HepG2 (cell line): ENCODE measurements at regions of chr6 and their contacts with region 1.

Region 1: GRCh38 chr6:11144393-11144851 is 32.9 kb upstream of the ERVFRD-1 start:
- DNase-seq: peak; percentile 77
- ATAC-seq: peak; percentile 94
- H3K4me3 ChIP-seq: no peak overlapping the region
- H3K27ac ChIP-seq: no peak overlapping the region
- H3K4me1 ChIP-seq: peaks cover 16% of the 10 kb centered on the region
- H3K27me3 ChIP-seq: no peaks in the 10 kb centered on the region
- CTCF ChIP-seq: peak; percentile 99
- EP300 ChIP-seq: no peak
- POLR2A ChIP-seq: no peak
- RAD21 ChIP-seq: peak; percentile 95

Region 2: DNA sequence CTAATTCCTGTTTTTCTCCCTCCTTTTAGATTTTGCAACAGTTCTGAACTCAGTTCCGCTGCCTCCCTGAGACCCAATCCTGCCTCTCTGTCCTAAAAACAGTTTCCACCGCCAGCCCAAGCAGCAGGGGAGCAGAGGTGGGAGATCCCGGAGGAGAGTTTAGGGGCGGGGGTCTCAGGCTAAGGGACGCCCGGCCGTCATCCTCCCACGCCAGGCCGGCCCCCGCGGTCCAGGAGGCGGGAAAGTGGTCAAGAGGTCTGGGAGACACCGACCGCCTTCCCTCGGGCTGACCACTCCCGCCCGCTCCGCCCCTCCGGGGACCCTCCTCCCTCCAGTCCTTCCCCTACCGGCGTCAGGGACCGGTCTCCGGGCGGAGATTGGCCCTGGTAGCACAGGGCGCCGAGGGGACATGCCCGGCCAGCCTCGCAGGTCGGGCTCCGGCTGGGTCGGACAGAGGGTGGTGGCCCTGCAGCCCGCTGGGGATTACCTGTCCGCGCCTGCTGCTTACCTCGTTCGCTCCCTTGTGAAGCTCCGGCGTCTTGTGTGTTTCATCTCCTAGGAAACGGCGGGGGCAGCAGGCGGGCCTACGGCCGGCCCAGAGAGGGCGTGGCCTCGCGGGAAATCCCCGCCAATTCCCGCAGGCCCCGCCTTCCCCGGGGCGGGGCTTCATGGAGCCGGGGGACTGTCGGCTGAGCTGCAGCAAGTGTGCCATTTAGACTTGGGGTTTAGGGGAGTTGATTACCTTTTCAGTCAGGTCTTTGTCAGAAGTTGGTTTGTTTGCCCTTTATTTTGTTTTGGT is 306.2 kb before region 1 on chr6 and contains the start of gene MAK:
- CTCF ChIA-PET with region 1: no interaction called
- POLR2A ChIA-PET with region 1: no interaction called
- in situ Hi-C with region 1: no loop called
- intact Hi-C with region 1: no loop called
- DNase-seq: peak; percentile 90
- ATAC-seq: peak; percentile 95
- H3K4me3 ChIP-seq: peak within 1 kb of the TSS; percentile 67 to 80 (median 69)
- H3K27ac ChIP-seq: peak within 1 kb of the TSS; percentile 55
- H3K4me1 ChIP-seq: peaks cover 28% of the 10 kb centered on the region
- H3K27me3 ChIP-seq: peaks cover 0 to 32% of the 10 kb centered on the region in 2 experiments; a peak in 3 of 5 replicates
- CTCF ChIP-seq: peak; percentile 18; the same call in 1 of the 2 replicates
- EP300 ChIP-seq: no peak
- POLR2A ChIP-seq: peak; percentile 36 to 48; a peak in 3 of 4 replicates
- RAD21 ChIP-seq: no peak
- total RNA-seq, gene MAK: 0.04 and 0.17 TPM in 2 replicates

Region 3: GRCh38 chr6:11093589-11094410 is 50.6 kb before region 1 on chr6 and contains the start of gene SMIM13:
- CTCF ChIA-PET with region 1: no interaction called
- POLR2A ChIA-PET with region 1: no interaction called
- in situ Hi-C with region 1: no loop called
- intact Hi-C with region 1: loop called (anchors 5 kb)
- DNase-seq: peak; percentile 98
- ATAC-seq: peak; percentile 97
- H3K4me3 ChIP-seq: peak within 1 kb of the TSS; percentile 93 to 99 (median 97)
- H3K27ac ChIP-seq: peak within 1 kb of the TSS; percentile 90
- H3K4me1 ChIP-seq: peaks cover 44% of the 10 kb centered on the region
- H3K27me3 ChIP-seq: no peaks in the 10 kb centered on the region; a peak in 1 of 5 replicates
- CTCF ChIP-seq: peak; percentile 67
- EP300 ChIP-seq: peak in 1 of 2 experiments; percentile 20; a peak in 2 of 4 replicates
- POLR2A ChIP-seq: peak; percentile 89 to 92
- RAD21 ChIP-seq: peak; percentile 79
- total RNA-seq, gene SMIM13: 9.5 and 10.2 TPM in 2 replicates

Region 4: DNA sequence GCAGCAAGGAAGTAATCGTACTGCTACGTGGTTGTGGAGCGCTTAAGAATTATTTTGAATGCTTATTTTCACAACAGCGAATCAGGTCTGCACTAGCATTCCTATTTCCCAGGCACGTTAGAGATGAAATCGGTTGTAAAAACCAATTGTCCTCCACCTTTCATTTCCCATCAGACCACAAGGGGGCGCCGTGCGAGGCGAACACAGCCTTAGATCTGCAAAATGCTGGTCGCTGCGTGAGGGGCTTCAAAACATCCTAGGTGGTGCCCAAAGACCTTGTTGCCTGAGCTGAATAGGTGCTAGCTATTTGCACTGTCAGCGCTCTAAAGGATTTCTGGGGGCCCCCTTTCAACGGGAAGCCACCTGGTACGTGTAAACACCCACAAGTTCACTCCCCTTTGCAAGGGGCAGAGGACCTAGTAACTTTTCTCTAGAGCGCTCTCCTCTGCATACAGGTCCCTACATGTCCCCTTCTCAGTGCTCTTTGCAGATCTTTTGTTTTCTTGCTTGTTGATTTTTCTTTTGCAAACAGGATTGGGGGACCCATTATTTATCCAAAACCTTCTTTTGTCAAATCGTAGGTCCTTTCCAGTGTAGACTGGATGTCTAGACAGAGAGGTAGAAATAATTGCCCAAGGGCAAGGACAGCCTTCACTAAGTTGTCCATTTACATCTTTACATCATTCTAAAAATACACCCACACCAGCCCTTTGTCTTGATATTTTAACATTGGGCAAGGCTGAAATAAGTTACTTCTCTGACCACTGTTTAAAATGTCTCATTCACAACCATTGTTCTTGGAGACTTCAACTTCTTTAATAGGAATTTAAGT is 28.3 kb after region 1 on chr6:
- CTCF ChIA-PET with region 1: interaction called, 14 read pairs
- POLR2A ChIA-PET with region 1: no interaction called
- in situ Hi-C with region 1: no loop called
- intact Hi-C with region 1: loop called (anchors 2 kb)
- DNase-seq: peak; percentile 66
- ATAC-seq: peak; percentile 86
- H3K4me3 ChIP-seq: peak overlapping the region in 1 of 3 experiments; percentile 47; a peak in 2 of 6 replicates
- H3K27ac ChIP-seq: no peak overlapping the region
- H3K4me1 ChIP-seq: peaks cover 36% of the 10 kb centered on the region
- H3K27me3 ChIP-seq: no peaks in the 10 kb centered on the region
- CTCF ChIP-seq: peak; percentile 96
- EP300 ChIP-seq: no peak
- POLR2A ChIP-seq: no peak
- RAD21 ChIP-seq: peak; percentile 83

Region 5: DNA sequence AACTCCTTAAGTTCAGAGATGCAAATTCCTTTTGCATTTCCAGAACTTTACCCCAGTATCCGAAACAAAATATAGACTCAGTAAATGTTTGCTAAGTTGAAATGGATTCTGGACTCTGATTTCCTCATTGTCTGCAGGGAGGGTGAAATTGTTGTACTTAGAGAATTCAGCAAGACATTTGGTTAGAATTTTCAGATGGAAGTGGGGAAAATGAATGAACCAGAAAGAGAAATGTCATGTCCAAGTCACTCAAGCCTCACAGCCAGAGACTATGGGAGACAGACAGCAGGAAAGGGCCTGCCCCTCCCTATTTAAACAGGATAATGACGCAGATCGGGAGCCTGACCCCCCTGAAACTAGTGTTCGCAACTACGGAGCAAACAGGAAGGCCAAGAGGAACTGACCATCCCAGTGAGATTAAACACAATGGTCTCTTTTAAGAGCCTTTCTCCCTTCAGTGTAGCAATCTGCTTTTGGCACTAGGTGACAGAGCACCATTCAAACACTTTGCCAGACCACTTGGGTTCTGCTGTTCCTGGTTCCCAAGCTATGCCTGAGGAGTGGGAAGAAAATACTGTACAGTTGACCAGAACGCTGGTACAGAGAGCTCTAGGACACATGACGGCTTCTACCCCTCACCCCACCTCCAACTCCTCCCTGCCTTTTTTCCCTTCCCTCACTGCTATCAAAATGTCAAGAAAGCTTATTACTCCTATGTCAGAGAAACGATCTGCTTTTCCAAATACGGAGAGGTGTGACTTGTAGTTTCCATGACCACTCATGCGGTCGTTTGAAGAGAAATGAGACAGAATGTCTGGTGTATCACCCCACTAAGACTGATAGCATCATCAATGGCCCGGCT is 74.3 kb after region 1 on chr6:
- CTCF ChIA-PET with region 1: no interaction called
- POLR2A ChIA-PET with region 1: no interaction called
- in situ Hi-C with region 1: no loop called
- intact Hi-C with region 1: loop called (anchors 5 kb)
- DNase-seq: peak; percentile 99
- ATAC-seq: peak; percentile 91
- H3K4me3 ChIP-seq: peak overlapping the region; percentile 13 to 54 (median 21)
- H3K27ac ChIP-seq: peak overlapping the region; percentile 85
- H3K4me1 ChIP-seq: peaks cover 100% of the 10 kb centered on the region
- H3K27me3 ChIP-seq: no peaks in the 10 kb centered on the region
- CTCF ChIP-seq: peak; percentile 46
- EP300 ChIP-seq: peak; percentile 86 to 89; a peak in 3 of 4 replicates
- POLR2A ChIP-seq: peak in 1 of 2 experiments; percentile 77; a peak in 3 of 4 replicates
- RAD21 ChIP-seq: peak; percentile 76

Region 6: DNA sequence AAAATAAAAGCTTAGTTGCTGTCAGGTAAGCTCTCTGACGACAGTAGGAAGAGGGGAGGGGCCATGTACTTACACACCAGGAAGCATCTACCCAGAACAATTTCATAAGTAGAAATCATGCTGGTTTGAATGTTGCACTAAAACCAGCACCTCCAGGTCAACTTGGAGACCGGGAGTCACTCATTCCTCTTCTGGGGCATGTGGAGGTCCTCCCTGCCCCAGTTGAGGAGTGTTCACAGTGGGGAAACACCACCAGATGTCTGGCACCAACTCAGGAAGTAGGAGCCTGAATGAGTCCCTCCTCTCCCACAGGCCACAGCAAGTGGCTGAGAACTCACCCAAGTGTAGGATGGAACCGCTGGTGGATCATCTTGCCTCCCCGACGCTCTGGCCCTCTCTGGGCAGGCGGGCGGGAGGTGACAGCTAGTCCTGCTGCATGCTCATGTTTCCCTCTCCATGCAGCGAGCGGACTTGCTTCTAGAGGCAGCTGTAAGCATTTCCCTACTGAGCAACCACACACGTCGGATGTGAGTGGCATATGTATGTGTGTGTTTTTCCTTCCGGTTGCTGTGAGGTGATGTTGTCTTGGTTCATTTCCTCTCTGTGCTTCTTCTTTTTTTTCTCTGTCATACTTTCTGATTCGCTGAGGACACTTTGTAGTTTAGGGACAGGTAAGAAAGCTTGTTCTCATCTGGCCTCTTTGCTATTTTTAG is 237.5 kb after region 1 on chr6:
- CTCF ChIA-PET with region 1: no interaction called
- POLR2A ChIA-PET with region 1: no interaction called
- in situ Hi-C with region 1: no loop called
- intact Hi-C with region 1: no loop called
- DNase-seq: no peak
- ATAC-seq: no peak
- H3K4me3 ChIP-seq: no peak overlapping the region
- H3K27ac ChIP-seq: no peak overlapping the region
- H3K4me1 ChIP-seq: peaks cover 20% of the 10 kb centered on the region
- H3K27me3 ChIP-seq: no peaks in the 10 kb centered on the region
- CTCF ChIP-seq: no peak
- EP300 ChIP-seq: no peak
- POLR2A ChIP-seq: no peak
- RAD21 ChIP-seq: no peak

Region 7: DNA sequence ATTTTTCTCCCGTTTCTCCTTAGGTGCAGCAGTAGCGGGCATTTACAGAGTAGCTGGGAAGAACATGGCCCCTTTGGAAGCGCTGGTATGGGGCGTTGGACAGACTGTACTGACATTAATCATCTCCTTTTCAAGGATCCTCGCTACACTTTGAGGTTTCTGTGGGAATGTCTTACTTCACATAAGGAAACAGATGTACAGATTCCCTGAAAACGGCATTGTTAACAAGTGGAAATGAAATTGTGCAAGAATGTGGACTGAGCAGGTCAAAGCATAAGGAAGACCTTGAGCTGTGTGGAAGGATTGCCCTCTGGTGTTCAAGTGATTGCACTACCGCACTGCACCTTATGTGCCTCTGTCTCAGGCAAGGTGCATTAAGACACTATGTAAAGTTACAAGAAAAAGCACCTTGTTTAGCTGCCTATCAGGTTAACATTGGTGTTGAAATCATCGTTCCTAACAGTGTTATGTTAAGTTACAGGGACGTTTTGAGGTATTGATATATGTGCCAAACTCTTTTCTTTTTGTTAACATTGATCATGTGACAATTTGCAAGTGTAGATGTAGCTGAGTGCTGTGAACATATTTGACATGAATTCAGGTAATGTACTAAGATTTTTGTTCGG is 431.1 kb after region 1 on chr6:
- CTCF ChIA-PET with region 1: interaction called, 13 read pairs
- POLR2A ChIA-PET with region 1: no interaction called
- in situ Hi-C with region 1: loop called (anchors 5 kb)
- intact Hi-C with region 1: loop called (anchors 1 kb)
- DNase-seq: peak; percentile 82
- ATAC-seq: peak; percentile 100
- H3K4me3 ChIP-seq: no peak overlapping the region
- H3K27ac ChIP-seq: no peak overlapping the region
- H3K4me1 ChIP-seq: peaks cover 6% of the 10 kb centered on the region
- H3K27me3 ChIP-seq: no peaks in the 10 kb centered on the region
- CTCF ChIP-seq: peak; percentile 99
- EP300 ChIP-seq: peak in 1 of 2 experiments; percentile 18; a peak in 1 of 4 replicates
- POLR2A ChIP-seq: no peak
- RAD21 ChIP-seq: peak; percentile 89